GM12878 (cell line): ENCODE measurements at regions of chr21 and their contacts with region 1.

Region 1: DNA sequence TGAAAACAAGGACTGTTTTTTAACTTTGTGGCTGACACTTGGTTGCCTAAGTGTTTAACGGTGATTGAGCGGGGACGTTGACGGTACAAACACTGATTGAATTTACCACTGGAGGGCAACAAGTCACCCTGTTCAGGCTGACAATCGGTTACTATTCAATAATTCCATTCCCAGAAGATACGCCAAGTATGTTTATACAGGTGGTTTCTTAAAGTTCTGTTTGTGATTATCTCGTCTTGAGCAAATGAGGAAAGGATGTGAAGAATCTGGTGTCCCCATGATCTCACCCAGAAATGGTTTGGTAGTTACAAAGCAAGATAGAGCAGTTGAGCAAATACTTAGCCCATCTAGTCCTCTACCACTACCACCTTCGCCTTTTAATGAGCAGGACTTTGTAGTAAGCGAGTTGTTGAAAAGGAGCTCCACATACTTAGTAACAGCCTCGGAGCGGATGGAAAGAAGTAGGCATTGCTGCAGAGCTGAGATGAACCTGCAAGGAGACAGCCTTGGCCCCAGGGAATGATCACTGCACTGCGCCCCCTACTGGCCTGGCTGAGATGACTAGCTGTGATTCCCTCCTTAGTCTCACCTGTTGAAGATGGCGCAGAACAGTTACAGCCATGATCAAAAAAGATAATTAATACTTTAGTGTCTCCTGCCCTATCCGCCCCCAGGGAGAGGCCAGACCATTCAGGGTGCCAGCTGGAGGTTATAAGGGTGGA is 36.3 kb downstream of the IFNAR1 start:
- DNase-seq: peak; percentile 78
- ATAC-seq: peak; percentile 98
- H3K4me3 ChIP-seq: peak overlapping the region; percentile 29
- H3K27ac ChIP-seq: peak overlapping the region; percentile 51
- H3K4me1 ChIP-seq: peaks cover 24% of the 10 kb centered on the region
- H3K27me3 ChIP-seq: no peaks in the 10 kb centered on the region
- CTCF ChIP-seq: peak; percentile 94 to 96 (median 94)
- EP300 ChIP-seq: no peak
- POLR2A ChIP-seq: peak; percentile 53; the same call in 1 of the 2 replicates
- RAD21 ChIP-seq: peak; percentile 66

Region 2: GRCh38 chr21:33205476-33205875 is 155.6 kb before region 1 on chr21:
- CTCF ChIA-PET with region 1: interaction called, 55 read pairs
- POLR2A ChIA-PET with region 1: interaction called, 4 read pairs
- RAD21 ChIA-PET with region 1: interaction called, 40 read pairs
- SMC1A ChIA-PET with region 1: interaction called, 30 read pairs
- in situ Hi-C with region 1: no loop called
- intact Hi-C with region 1: no loop called
- DNase-seq: no peak
- ATAC-seq: peak; percentile 29
- H3K4me3 ChIP-seq: no peak overlapping the region
- H3K27ac ChIP-seq: peak overlapping the region; percentile 51
- H3K4me1 ChIP-seq: peaks cover 19% of the 10 kb centered on the region
- H3K27me3 ChIP-seq: no peaks in the 10 kb centered on the region
- CTCF ChIP-seq: peak in 1 of 3 experiments; percentile 8; a peak in 1 of 6 replicates
- EP300 ChIP-seq: no peak
- POLR2A ChIP-seq: no peak
- RAD21 ChIP-seq: no peak

Region 3: GRCh38 chr21:33266050-33266788 is 94.8 kb before region 1 on chr21 and contains the start of gene IL10RB:
- CTCF ChIA-PET with region 1: interaction called, 23 read pairs
- POLR2A ChIA-PET with region 1: interaction called, 3 read pairs
- RAD21 ChIA-PET with region 1: interaction called, 16 read pairs
- SMC1A ChIA-PET with region 1: interaction called, 8 read pairs
- in situ Hi-C with region 1: no loop called
- intact Hi-C with region 1: loop called (anchors 5 kb)
- DNase-seq: peak; percentile 27
- ATAC-seq: peak; percentile 72
- H3K4me3 ChIP-seq: peak within 1 kb of the TSS; percentile 81
- H3K27ac ChIP-seq: peak within 1 kb of the TSS; percentile 96
- H3K4me1 ChIP-seq: peaks cover 28% of the 10 kb centered on the region
- H3K27me3 ChIP-seq: no peaks in the 10 kb centered on the region
- CTCF ChIP-seq: no peak
- EP300 ChIP-seq: no peak
- POLR2A ChIP-seq: peak; percentile 88
- RAD21 ChIP-seq: no peak
- polyA plus RNA-seq, gene IL10RB: 15.0 to 23.3 TPM

Region 4: GRCh38 chr21:33332143-33332542 is 28.9 kb before region 1 on chr21:
- CTCF ChIA-PET with region 1: interaction called, 40 read pairs
- POLR2A ChIA-PET with region 1: no interaction called
- RAD21 ChIA-PET with region 1: interaction called, 8 read pairs
- SMC1A ChIA-PET with region 1: interaction called, 13 read pairs
- in situ Hi-C with region 1: no loop called
- intact Hi-C with region 1: no loop called
- DNase-seq: no peak
- ATAC-seq: peak; percentile 83
- H3K4me3 ChIP-seq: peak overlapping the region; percentile 0; the same call in 1 of the 2 replicates
- H3K27ac ChIP-seq: peak overlapping the region; percentile 82
- H3K4me1 ChIP-seq: peaks cover 29% of the 10 kb centered on the region
- H3K27me3 ChIP-seq: no peaks in the 10 kb centered on the region
- CTCF ChIP-seq: no peak
- EP300 ChIP-seq: no peak
- POLR2A ChIP-seq: peak; percentile 17; the same call in 1 of the 2 replicates
- RAD21 ChIP-seq: 0 out of 2 replicates have a peak, but pooled peaks have one; percentile 1

Region 5: DNA sequence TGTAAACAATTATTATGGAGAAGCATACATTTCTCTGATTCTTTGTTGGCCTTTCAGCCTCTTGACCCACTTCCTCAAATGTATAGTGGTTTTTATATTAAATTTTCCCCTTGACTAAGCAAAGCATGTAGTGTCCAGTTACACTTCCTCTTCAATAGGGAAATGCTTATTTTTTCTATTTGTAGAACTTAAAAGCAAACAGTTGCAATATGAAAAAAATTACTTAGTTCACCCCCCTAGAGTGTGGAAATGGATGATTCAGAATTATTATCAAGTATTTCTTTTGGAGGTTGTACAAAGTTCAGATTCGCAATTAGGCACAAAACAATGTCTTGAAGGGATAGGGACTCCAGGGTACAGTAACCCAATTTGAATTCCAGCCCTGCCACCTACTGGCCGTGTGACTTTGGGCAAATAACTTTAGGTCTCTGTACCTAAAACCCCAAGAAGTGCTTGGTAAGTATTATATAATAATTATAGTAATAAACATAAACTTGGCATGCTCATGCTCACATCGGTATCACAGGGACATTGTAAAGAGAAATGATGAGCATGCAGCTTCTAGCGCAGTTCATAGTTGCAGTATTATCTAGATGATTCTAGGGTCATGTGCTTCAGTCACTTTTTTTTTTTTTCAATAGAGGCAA is 13.5 kb after region 1 on chr21:
- CTCF ChIA-PET with region 1: interaction called, 75 read pairs
- POLR2A ChIA-PET with region 1: interaction called, 6 read pairs
- RAD21 ChIA-PET with region 1: interaction called, 18 read pairs
- SMC1A ChIA-PET with region 1: interaction called, 39 read pairs
- in situ Hi-C with region 1: no loop called
- intact Hi-C with region 1: no loop called
- DNase-seq: no peak
- ATAC-seq: peak; percentile 87
- H3K4me3 ChIP-seq: no peak overlapping the region
- H3K27ac ChIP-seq: no peak overlapping the region
- H3K4me1 ChIP-seq: peaks cover 17% of the 10 kb centered on the region
- H3K27me3 ChIP-seq: no peaks in the 10 kb centered on the region
- CTCF ChIP-seq: peak; percentile 62 to 74 (median 63)
- EP300 ChIP-seq: peak in 1 of 2 experiments; percentile 27; a peak in 1 of 4 replicates
- POLR2A ChIP-seq: no peak
- RAD21 ChIP-seq: peak; percentile 77

Region 6: GRCh38 chr21:33403779-33404585 is 42.9 kb after region 1 on chr21:
- CTCF ChIA-PET with region 1: interaction called, 31 read pairs
- POLR2A ChIA-PET with region 1: no interaction called
- RAD21 ChIA-PET with region 1: interaction called, 34 read pairs
- SMC1A ChIA-PET with region 1: interaction called, 36 read pairs
- in situ Hi-C with region 1: no loop called
- intact Hi-C with region 1: loop called (anchors 5 kb)
- DNase-seq: no peak
- ATAC-seq: peak; percentile 60
- H3K4me3 ChIP-seq: peak overlapping the region; percentile 84
- H3K27ac ChIP-seq: peak overlapping the region; percentile 97
- H3K4me1 ChIP-seq: peaks cover 15% of the 10 kb centered on the region
- H3K27me3 ChIP-seq: no peaks in the 10 kb centered on the region
- CTCF ChIP-seq: no peak
- EP300 ChIP-seq: no peak
- POLR2A ChIP-seq: peak; percentile 77
- RAD21 ChIP-seq: no peak

Region 7: DNA sequence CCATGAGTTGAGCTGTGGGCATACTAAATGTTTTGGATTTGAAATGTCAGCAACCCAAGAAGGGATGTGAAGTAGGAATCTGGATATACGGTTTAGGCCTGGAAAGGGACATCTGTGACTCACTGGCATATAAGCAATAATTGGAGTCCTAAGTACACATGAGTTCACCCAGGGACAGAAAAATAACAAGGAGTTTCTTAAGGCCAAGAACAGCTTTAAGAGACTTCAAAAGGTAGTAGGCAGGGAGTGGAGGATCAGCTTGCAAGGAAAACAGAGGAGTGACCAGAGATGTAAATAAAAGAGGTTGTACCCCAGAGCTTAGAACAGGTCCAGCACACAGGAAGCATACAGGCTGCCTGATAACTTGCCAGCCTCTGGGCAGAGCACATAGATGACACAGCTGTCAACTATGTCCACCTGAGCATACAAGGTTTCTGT is 90.6 kb after region 1 on chr21:
- CTCF ChIA-PET with region 1: interaction called, 182 read pairs
- POLR2A ChIA-PET with region 1: interaction called, 3 read pairs
- RAD21 ChIA-PET with region 1: interaction called, 128 read pairs
- SMC1A ChIA-PET with region 1: interaction called, 133 read pairs
- in situ Hi-C with region 1: no loop called
- intact Hi-C with region 1: no loop called
- DNase-seq: no peak
- ATAC-seq: no peak
- H3K4me3 ChIP-seq: no peak overlapping the region
- H3K27ac ChIP-seq: no peak overlapping the region
- H3K4me1 ChIP-seq: no peaks in the 10 kb centered on the region
- H3K27me3 ChIP-seq: no peaks in the 10 kb centered on the region
- CTCF ChIP-seq: no peak
- EP300 ChIP-seq: no peak
- POLR2A ChIP-seq: no peak
- RAD21 ChIP-seq: no peak

Region 8: DNA sequence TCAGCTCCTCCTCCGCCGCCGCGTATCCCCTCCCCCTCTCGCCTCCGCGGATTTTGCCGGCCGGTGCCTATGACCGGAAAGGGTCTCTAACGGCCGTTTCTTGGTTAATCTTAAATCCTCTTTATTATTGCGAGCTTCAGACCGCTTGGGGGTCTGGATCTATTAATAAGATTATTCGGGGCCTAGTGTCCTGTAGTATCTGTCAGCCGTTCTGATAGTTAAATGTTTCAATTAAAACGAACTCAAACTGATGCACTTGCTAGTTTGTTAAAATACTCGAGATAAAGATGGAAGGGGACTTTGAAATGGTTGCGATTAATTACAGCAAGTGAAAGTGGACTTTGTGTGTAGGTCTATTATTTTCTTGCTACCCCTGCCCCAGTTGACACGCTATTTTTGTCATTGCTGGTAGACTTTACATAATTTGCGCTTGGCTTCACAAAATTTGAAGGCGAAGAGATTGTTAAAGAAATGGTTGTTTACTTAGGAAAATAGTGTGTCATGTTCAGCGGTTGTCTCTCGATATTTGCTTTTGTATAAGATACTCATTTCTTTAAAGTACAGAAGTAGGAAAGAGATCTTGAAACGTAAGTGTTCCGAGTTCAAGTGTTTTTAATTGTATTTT is 182.6 kb after region 1 on chr21:
- CTCF ChIA-PET with region 1: no interaction called
- POLR2A ChIA-PET with region 1: no interaction called
- RAD21 ChIA-PET with region 1: no interaction called
- SMC1A ChIA-PET with region 1: no interaction called
- in situ Hi-C with region 1: no loop called
- intact Hi-C with region 1: no loop called
- DNase-seq: no peak
- ATAC-seq: peak; percentile 49
- H3K4me3 ChIP-seq: peak overlapping the region; percentile 81
- H3K27ac ChIP-seq: peak overlapping the region; percentile 100
- H3K4me1 ChIP-seq: no peaks in the 10 kb centered on the region
- H3K27me3 ChIP-seq: no peaks in the 10 kb centered on the region
- CTCF ChIP-seq: no peak
- EP300 ChIP-seq: no peak
- POLR2A ChIP-seq: no peak
- RAD21 ChIP-seq: no peak

Region 9: DNA sequence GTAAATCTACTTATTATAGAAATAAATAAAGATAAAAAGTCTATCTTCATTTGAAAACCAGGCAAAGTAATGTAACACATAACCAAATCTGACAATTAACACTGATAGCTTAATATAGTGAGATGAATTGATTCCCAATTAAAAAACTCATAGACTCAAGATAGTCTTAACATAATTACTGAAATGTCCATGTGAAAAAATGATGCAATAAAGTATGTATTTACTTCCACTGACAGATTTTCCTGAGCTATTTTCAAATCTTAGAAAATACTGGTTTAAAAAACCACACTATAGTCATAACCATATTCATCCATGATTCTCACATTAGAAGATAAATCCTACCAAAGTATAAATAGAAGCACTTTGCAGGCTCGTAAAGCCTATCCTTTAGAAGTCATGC is 237.0 kb after region 1 on chr21:
- CTCF ChIA-PET with region 1: no interaction called
- POLR2A ChIA-PET with region 1: no interaction called
- RAD21 ChIA-PET with region 1: no interaction called
- SMC1A ChIA-PET with region 1: no interaction called
- in situ Hi-C with region 1: no loop called
- intact Hi-C with region 1: no loop called
- DNase-seq: no peak
- ATAC-seq: no peak
- H3K4me3 ChIP-seq: no peak overlapping the region
- H3K27ac ChIP-seq: no peak overlapping the region
- H3K4me1 ChIP-seq: no peaks in the 10 kb centered on the region
- H3K27me3 ChIP-seq: no peaks in the 10 kb centered on the region
- CTCF ChIP-seq: no peak
- EP300 ChIP-seq: no peak
- POLR2A ChIP-seq: no peak
- RAD21 ChIP-seq: no peak